ENCODE measurements at regions of chr9 and their contacts with region 1.

Region 1: DNA sequence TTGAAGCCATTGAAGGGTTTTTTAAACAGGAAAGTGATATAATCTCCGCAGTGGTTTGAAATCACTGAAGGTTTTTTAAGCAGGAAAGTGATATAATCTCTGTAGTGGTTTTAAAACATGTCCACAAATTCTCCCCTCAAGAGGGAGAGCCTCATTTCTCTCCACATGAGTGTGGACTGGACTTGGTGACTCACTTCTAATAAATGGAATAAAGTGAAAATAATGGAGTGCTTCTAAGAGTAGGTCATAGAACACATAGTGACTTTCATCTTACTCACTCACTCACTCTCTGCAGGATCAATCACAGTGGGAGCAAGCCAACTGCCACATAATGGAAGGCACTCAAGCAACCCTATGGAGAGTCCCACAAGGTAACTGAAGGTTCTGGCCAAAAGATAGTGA is 12.0 kb downstream of the CTNNAL1 start:
- DNase-seq: no peak

Region 2: GRCh38 chr9:108967916-108968315 is 33.4 kb before region 1 on chr9:
- in situ Hi-C with region 1: loop called (anchors 5 kb)
- DNase-seq: peak; percentile 43

Measured in G401 (cell line).